Natural killer cell (primary cell): ENCODE measurements at regions of chr12 and their contacts with region 1.

Region 1: DNA sequence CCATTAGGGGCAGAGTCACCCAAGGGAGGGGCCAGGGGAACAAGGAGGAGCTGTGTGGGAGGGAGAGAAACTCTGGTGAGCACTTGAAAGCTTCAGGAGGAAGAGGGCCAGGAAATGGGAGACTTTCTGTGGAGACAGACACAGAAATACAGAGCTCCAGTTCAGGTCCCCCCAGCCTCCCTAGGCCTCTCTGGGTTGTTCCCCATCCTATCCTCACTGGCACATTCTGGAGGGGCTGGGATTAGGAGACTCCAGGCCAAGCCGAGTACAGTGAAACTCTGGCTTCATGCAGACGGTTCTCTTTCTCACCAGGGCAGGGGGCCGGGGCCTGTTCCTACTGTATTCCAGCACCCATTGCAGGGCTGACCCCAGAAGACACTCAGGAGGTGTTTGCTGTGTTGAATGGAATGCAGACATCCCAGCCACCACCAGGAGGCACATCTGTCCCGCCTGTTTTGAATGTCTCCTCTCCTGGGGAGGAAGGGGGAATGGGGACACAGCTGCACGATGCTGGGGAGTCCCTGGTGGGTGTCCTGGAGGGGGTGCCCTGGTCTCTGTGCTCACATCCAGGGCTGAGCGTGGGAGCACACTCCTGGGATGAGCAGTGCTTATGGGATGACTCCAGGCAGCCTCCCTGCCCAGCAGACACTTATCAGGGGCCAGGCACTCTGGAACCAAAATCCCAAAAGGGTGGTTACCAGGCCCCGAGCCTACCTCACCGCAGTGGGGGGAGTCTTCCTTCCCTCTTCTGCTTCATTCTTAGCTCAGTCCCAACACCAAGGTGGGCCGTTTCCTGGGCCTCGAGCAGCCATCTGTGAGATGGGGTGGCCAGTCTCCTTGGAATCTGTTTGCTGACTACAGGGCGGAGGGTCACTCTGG is 5.5 kb upstream of the KRT84 start:
- DNase-seq: peak in 1 of 2 donors; percentile 39
- ATAC-seq: peak in 1 of 3 donors; percentile 30
- H3K4me3 ChIP-seq: no peak overlapping the region
- H3K4me3 Mint-ChIP-seq: no peak overlapping the region
- H3K27ac ChIP-seq: no peak overlapping the region
- H3K27ac Mint-ChIP-seq: no peak overlapping the region
- H3K4me1 ChIP-seq: no peaks in the 10 kb centered on the region
- H3K4me1 Mint-ChIP-seq: no peaks in the 10 kb centered on the region
- H3K27me3 ChIP-seq: no peaks in the 10 kb centered on the region
- H3K27me3 Mint-ChIP-seq: peaks cover 0 to 10% of the 10 kb centered on the region in 2 donors
- CTCF ChIP-seq: no peak

Region 2: DNA sequence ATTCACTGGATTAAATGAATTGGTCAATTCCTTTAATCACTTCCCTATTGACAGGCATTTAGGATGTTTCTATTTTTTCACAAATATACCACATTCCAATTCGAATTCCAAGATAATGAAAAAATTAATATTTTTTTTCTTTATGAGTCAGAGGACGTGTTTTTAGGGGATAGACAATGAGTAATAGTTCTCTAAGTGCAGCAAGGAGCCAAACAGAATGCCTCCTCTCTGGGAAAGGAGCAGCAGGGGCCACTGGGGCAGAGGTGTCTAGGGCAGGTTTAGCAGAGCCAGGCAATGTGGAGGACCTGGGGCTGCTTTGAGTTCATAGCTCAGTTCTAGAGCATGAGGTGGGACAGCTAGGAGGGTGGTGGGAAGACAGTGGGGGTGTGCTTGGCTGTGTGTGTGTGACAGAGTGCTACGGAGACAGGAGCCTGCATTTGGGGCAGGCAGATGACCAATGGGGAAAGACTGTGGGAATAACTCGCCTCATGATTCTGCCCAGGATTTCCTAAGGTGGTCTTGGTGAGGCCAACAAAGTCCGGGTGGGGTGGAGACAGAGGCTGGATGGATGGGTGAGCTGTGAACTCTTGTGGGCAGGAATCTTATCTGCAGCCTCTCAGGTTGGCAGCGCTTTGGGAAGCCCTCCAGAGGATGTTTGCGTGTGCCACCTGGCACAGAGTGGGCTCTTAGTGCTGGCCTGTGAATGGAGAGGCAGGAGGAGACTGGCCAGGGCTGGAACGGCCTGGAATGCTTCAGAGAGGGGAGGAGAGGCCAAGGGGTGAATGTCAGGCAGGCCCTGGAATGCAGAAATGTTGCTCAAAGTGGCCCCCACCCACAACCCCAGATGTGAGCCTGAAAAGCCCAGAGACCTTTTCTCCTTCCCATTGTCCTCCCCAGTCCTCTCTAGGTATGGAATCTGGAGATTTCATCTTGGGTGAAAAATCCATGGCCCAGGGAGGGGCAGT is 160.4 kb before region 1 on chr12:
- intact Hi-C with region 1: no loop called
- DNase-seq: no peak
- ATAC-seq: no peak
- H3K4me3 ChIP-seq: no peak overlapping the region
- H3K4me3 Mint-ChIP-seq: no peak overlapping the region
- H3K27ac ChIP-seq: no peak overlapping the region
- H3K27ac Mint-ChIP-seq: no peak overlapping the region
- H3K4me1 ChIP-seq: no peaks in the 10 kb centered on the region
- H3K4me1 Mint-ChIP-seq: no peaks in the 10 kb centered on the region
- H3K27me3 ChIP-seq: peaks cover 20% of the 10 kb centered on the region
- H3K27me3 Mint-ChIP-seq: peaks cover 54 to 73% of the 10 kb centered on the region in 2 donors
- CTCF ChIP-seq: no peak

Region 3: DNA sequence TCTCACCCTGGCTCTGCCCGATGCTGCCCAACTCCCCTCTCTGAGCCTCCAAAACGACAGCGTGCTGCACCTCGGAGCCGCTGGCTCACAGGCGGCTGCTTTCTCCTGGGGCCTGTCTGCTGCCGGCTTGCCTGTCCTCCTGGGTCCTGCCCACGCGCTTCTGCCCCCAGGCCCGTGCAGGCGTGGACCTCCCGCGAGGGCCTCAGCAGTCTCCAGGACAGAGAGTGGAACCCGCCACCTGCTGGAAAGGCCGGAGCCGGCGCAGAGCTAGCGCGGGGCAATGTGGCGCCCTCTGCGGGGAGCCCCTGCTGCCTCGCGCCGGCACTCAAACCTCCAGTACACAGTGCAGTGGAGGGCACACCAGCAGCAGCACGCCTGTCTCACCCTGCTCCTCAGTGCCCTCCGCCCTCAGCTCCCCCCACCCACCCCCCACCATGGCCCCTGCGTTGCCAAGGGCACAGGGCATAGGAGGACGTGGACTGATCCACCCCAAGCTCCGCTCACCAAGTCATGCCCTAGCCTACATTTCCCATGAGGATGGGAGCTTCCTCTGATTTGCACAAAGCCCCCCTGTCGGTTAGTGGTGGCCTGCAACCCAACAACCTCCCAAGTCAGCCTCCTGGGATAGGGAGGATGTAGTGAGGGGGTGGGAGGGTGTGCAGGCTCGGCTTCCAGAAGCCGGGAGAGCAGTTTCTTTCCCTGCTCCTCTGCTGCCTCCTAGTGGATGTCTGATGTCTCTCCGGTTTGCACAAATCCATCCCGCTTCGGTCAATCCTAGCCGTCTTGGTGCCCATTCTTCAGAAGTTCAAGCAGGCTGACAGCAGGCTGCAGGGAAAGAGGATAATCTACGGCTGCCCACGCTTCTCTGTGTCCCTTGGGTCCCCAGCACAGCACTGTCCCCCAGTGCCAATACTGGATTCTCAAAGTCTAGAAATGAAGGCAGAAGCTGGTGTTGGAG is 488.7 kb after region 1 on chr12:
- intact Hi-C with region 1: loop called (anchors 5 kb)
- DNase-seq: peak; percentile 77 to 85
- ATAC-seq: peak; percentile 95 to 98 (median 98)
- H3K4me3 ChIP-seq: no peak overlapping the region
- H3K4me3 Mint-ChIP-seq: peak overlapping the region; percentile 68
- H3K27ac ChIP-seq: no peak overlapping the region
- H3K27ac Mint-ChIP-seq: peak overlapping the region in 1 of 2 donors; percentile 37
- H3K4me1 ChIP-seq: peaks cover 22% of the 10 kb centered on the region
- H3K4me1 Mint-ChIP-seq: peaks cover 2 to 33% of the 10 kb centered on the region in 2 donors
- H3K27me3 ChIP-seq: peaks cover 3% of the 10 kb centered on the region
- H3K27me3 Mint-ChIP-seq: peaks cover 0 to 27% of the 10 kb centered on the region in 2 donors
- CTCF ChIP-seq: peak; percentile 99